Posterior vena cava (tissue), 2 donors: ENCODE measurements at regions of chr2 and their contacts with region 1.

Region 1: DNA sequence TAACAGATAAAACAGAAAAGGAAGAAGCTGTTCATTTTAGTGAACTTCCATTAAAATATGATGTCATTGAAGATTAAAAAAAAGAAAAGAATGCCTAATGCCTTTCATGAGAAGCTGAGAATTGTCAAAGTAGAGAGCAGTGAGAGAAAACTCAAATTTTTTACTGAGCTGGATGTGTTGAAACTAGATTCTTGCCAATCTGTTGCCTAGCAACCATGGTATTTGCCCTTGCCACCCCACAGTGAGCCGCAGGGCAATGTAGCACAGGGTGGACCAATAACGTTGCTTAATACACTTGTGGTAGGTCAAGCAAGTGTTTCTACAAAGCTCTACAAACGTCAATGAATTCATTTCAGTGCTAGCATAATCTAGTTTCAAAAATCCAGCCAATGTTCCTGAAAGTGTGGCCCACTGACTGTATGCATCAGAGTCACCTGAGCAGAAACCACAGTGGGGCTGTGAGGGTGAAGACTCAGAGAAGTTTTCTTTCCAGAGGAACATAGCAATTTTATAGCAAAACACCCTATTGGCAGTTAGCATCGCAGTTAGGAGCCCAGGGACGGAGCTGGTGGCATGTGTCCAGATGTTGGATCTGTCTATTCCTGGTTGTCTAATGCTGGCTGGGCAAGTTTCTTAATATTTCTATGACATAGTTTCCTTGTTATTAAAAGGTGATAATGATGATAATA is 132.2 kb downstream of the DOCK10 start:
- DNase-seq: peak; percentile 85

Region 2: DNA sequence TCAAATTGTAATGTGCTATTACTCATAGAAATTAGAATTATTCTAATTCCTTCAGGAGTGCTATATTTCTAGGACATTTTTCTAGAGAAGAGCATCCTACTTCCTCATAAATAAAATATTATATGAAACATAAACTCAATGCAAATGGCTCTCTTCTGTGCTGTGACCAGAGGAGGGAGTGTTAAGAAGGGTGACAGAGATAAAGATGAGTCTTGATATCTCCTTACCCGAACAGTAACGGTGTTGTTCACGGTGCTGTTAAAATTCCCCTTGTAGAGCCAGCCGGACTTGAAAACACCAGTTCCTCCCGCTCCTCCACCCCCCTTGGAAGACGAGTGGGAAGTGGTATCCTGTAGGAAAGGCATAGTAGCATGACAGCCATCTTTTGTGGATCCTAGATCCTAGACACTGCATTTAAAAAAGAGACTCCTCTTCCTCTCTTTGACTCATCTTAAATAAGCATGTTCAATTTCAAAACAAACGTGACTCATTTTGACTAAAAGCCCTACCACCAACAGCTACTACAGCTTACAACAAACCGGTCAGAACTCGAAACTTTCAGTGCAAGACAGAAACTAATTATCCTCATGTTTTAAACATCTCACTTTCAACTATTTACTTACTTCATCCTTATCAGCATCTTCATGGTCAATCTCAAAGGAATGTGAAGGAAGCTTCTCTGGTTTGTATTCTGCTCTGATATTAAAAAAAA is 24.0 kb before region 1 on chr2:
- intact Hi-C with region 1: loop called in 1 of 2 experiments (anchors 2 kb)
- DNase-seq: no peak